Body of pancreas (tissue), 4 donors: ENCODE measurements at regions of chr19 and their contacts with region 1.

Region 1: DNA sequence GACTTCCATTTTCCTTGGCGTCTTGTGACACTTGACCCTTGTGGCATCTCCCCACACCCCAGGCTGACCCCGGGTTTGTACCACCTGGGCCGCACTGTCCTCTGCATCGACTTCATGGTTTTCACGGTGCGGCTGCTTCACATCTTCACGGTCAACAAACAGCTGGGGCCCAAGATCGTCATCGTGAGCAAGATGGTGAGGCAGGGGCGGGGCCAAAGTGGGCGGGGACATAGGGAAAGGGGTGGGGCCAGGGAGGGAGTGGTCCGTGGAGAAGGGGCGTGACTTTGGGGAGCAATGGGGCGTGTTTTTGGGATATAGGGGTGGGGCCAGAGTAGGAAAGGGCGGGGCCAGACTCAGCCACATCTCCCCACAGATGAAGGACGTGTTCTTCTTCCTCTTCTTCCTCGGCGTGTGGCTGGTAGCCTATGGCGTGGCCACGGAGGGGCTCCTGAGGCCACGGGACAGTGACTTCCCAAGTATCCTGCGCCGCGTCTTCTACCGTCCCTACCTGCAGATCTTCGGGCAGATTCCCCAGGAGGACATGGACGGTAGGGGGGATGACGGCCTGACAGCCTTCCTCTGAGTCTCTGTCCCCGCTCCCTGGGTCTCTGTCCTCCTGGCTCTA is 42.8 kb downstream of the TRPM4 start:
- DNase-seq: no peak
- ATAC-seq: peak; percentile 30
- H3K4me3 ChIP-seq: no peak overlapping the region
- H3K27ac ChIP-seq: no peak overlapping the region
- H3K4me1 ChIP-seq: no peaks in the 10 kb centered on the region
- H3K27me3 ChIP-seq: no peaks in the 10 kb centered on the region
- CTCF ChIP-seq: no peak
- POLR2A ChIP-seq: no peak

Region 2: DNA sequence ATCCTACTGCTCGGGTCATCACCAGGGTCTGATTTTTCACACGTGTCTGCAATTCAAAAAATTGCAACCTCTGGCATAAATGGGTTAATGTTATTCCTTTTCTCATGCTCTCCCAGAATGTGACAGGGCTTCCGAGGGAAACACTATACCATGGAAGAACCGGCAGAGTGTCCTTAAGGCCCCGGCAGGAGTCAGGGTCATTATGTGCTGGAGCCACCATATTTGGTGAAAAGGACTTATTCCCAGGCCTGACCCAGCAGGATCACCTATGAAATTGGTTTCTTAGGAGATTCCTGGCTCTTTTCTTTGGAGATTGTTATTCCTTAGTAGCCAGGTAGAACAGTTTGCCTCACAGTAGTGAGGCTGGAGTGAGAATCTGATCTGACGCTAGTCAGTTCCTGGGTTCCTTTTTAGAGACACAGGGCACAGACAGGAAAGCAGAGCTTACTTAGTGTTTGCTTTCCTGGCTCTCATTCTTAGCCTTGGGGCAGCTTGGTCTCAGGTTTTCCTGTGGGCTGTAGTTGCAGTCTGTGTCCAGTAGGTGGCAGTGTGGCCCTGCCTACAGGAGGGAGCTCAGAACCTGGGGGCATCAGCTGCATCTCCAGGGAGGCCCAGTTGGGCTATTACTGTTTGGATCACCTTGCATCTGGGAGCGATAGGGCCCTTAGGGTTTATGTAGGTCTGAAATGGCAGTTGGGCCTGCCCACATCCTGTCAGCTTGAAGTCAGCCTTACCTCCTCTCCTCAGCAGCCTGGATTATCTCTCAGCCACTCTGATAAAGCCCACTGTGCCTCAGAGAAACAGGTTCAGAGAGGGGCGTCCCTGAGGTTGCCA is 102.7 kb before region 1 on chr19:
- intact Hi-C with region 1: loop called (anchors 5 kb)
- DNase-seq: peak; percentile 72 to 80 (median 73)
- ATAC-seq: peak; percentile 86
- H3K4me3 ChIP-seq: no peak overlapping the region
- H3K27ac ChIP-seq: peak overlapping the region in 1 of 4 donors; percentile 45
- H3K4me1 ChIP-seq: peaks cover 15% of the 10 kb centered on the region
- H3K27me3 ChIP-seq: no peaks in the 10 kb centered on the region
- CTCF ChIP-seq: peak; percentile 93 to 100 (median 96)
- POLR2A ChIP-seq: no peak